Panc1 (cell line): ENCODE measurements at regions of chr2 and their contacts with region 1.

Region 1: GRCh38 chr2:139018252-139018651 is 238.1 kb upstream of the NXPH2 start:
- DNase-seq: no peak
- ATAC-seq: no peak
- H3K4me3 ChIP-seq: no peak overlapping the region
- H3K27ac ChIP-seq: no peak overlapping the region
- H3K4me1 ChIP-seq: no peaks in the 10 kb centered on the region
- H3K27me3 ChIP-seq: no peaks in the 10 kb centered on the region
- CTCF ChIP-seq: no peak

Region 2: DNA sequence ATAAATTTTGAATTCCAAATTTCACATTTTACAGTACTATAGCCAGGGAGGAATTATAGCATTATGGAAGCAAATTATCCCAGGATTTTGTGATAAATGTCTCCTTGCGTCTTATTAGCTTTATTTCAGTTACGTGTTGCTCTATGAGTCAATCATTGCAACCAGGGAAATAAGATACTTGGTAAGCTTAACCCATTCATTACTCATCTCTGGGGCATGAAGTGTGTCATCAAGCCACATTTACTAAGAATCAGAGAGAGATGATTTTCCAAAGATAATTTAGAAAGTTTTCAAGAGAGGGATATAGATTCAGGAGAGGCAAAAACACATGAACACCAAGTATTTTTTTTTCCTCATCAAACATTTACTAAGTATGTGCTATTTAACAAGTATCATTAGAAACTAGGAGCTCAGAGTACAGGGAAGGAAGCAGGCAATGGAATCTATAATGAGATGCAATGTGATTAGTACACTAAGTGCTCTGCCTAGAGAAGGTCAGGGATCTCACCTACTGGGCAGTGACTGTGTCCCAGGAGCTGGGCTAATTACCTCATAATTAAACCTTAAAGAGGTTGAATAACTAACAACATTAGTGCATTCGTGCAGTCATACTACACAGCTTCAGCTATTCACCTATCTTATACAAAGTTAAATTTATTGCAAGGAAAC is 20.3 kb before region 1 on chr2:
- CTCF ChIA-PET with region 1: no interaction called
- POLR2A ChIA-PET with region 1: interaction called, 11 read pairs
- in situ Hi-C with region 1: no loop called
- intact Hi-C with region 1: no loop called
- DNase-seq: peak; percentile 39
- ATAC-seq: no peak
- H3K4me3 ChIP-seq: no peak overlapping the region
- H3K27ac ChIP-seq: no peak overlapping the region
- H3K4me1 ChIP-seq: no peaks in the 10 kb centered on the region
- H3K27me3 ChIP-seq: no peaks in the 10 kb centered on the region
- CTCF ChIP-seq: no peak